MCF 10A (cell line): ENCODE measurements at regions of chr7 and their contacts with region 1.

Region 1: GRCh38 chr7:97117372-97118188 is at the start of gene SDHAF3:
- DNase-seq: peak; percentile 95
- H3K4me3 Mint-ChIP-seq: peak within 1 kb of the TSS; percentile 94
- H3K27ac Mint-ChIP-seq: peak within 1 kb of the TSS; percentile 68
- H3K4me1 Mint-ChIP-seq: peaks cover 23% of the 10 kb centered on the region
- H3K27me3 Mint-ChIP-seq: no peaks in the 10 kb centered on the region
- CTCF ChIP-seq: no peak
- total RNA-seq, gene SDHAF3: 6.7 and 12.3 TPM in 2 replicates

Region 2: DNA sequence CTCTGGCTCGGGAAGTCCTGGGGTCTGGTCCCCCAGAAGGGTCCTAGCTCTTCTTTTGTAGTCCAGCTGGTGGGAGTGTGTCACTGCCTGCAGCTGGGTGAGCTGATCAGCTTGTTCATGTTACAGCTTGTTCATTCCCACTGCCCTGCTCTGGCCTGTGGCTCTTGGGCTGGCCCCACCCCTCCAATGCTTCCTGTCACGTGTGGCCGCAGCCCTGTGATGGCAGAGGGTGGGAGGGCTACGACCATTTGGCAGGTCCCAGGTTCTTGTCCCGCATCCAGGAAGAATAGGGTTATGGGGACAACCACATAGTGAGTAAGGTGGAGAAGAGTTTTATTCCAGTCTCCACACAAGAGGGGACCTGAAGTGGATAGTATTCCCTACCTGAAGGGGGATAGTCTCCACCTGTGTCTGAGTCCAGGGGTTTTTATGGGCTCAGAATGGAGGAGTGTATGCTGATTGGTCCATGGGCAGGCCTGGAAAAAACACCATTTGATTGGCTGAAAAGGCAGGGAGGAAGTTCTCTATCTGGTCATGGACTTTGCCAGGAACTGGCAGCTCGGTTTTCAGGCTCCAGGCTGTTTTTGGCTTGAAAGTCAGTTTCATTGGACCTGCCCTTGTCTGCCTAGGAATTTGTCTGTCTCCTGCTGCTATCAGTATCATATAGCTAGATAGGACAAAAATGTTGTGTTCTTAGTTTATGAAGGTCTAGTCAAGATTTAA is 13.0 kb after region 1 on chr7:
- CTCF ChIA-PET with region 1: interaction called, 9 read pairs
- POLR2A ChIA-PET with region 1: interaction called, 20 read pairs
- intact Hi-C with region 1: no loop called
- DNase-seq: peak; percentile 30
- H3K4me3 Mint-ChIP-seq: no peak overlapping the region
- H3K27ac Mint-ChIP-seq: no peak overlapping the region
- H3K4me1 Mint-ChIP-seq: no peaks in the 10 kb centered on the region
- H3K27me3 Mint-ChIP-seq: no peaks in the 10 kb centered on the region
- CTCF ChIP-seq: no peak

Region 3: DNA sequence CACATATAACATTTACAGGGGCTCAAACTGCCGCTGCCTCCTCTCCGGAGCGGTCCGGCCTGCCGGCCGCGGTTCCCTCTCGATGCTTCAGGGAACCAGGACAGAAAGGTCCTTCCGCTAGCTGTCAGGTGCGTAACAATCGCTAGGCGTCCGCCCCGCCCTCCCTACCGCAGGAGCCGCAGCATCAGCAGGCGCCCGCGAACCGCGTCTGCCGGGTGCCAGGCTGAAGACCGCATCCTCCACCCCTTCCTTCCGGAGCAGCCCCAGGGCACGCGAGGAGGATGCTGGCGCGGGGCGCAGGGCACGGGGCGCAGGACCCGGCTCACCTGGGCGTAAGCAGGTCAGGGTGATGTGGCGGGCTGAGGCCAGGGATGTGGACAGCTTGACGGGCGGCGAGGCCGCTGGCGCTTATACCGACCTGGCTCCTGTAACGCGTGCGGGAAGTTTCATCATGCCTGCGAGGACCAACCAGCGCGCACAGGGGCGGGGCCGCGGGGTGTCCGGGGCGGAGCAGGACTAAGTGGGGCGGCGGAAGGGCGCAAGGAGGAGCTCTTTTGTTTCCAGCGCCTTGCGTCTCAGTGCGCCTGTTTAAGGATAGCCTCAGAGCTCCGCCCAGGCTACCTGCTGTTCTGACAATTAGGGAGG is 754.6 kb after region 1 on chr7 and contains the start of gene ASNS:
- CTCF ChIA-PET with region 1: no interaction called
- POLR2A ChIA-PET with region 1: interaction called, 13 read pairs
- intact Hi-C with region 1: no loop called
- DNase-seq: peak; percentile 96
- H3K4me3 Mint-ChIP-seq: peak within 1 kb of the TSS; percentile 86
- H3K27ac Mint-ChIP-seq: peak within 1 kb of the TSS; percentile 83
- H3K4me1 Mint-ChIP-seq: peaks cover 12% of the 10 kb centered on the region
- H3K27me3 Mint-ChIP-seq: no peaks in the 10 kb centered on the region
- CTCF ChIP-seq: no peak
- total RNA-seq, gene ASNS: 191 and 303 TPM in 2 replicates